Mammary epithelial cell (primary cell): ENCODE measurements at regions of chr12 and their contacts with region 1.

Region 1: GRCh38 chr12:93121729-93122488 is 192.8 kb upstream of the EEA1 start:
- DNase-seq: peak; percentile 95
- H3K4me3 ChIP-seq: peak overlapping the region in 2 of 3 experiments; percentile 12 to 21
- H3K27ac ChIP-seq: peak overlapping the region; percentile 95
- H3K4me1 ChIP-seq: peaks cover 28% of the 10 kb centered on the region
- H3K27me3 ChIP-seq: no peaks in the 10 kb centered on the region
- CTCF ChIP-seq: no peak

Region 2: GRCh38 chr12:92759634-92760268 is 362.2 kb before region 1 on chr12:
- CTCF ChIA-PET with region 1: interaction called, 10 read pairs
- dilution Hi-C with region 1: no loop called
- in situ Hi-C with region 1: no loop called
- intact Hi-C with region 1: no loop called
- DNase-seq: peak; percentile 87
- H3K4me3 ChIP-seq: no peak overlapping the region
- H3K27ac ChIP-seq: no peak overlapping the region
- H3K4me1 ChIP-seq: peaks cover 10% of the 10 kb centered on the region
- H3K27me3 ChIP-seq: no peaks in the 10 kb centered on the region
- CTCF ChIP-seq: no peak

Region 3: GRCh38 chr12:93087840-93088610 is 33.9 kb before region 1 on chr12:
- CTCF ChIA-PET with region 1: no interaction called
- dilution Hi-C with region 1: no loop called
- in situ Hi-C with region 1: no loop called
- intact Hi-C with region 1: loop called (anchors 1 kb)
- DNase-seq: no peak
- H3K4me3 ChIP-seq: no peak overlapping the region
- H3K27ac ChIP-seq: no peak overlapping the region
- H3K4me1 ChIP-seq: peaks cover 33% of the 10 kb centered on the region
- H3K27me3 ChIP-seq: no peaks in the 10 kb centered on the region
- CTCF ChIP-seq: no peak

Region 4: DNA sequence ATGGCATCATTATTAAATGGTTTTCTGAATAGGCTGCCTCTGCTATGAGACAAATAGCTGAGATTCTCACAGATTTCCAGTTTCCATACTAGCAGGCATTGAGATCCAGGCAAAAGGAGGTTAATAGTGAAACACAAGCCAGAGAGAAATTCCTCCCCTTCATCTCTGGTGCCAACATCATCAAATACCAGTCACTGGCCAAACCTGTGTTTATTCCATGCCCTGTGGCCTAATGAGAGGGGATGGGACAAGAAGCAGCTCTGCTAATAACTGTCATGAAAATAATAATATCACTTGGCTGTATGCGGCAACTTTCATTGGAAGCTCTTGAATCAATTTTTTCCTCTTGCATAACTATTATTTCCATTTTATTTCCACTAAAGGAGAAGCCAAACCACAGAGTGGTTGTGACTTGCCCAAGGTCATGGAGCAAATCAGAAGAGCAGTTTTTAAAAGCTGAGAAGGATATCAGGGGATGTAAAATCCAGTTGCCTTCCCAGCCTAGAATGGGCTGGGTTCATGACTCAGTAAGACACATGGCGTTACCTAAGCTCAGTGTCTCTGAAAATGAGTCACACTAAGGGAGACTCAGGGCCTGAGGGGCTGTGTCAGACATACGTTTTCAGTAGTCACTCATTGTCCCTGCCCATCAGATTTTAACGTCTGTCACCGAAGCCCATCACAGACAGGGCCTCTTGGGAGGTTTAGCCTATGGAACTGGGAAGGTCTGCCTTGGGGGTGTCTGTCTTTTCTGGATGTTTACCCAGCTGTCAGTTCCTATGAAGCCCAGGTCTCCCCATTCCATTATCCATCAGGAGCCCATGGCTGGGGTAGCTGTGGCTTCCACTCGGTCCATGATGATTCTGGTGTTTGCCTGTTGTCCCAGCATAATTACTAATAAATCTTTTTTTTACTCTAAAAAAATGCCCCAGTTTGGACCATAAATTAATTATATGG is 16.0 kb after region 1 on chr12:
- CTCF ChIA-PET with region 1: no interaction called
- dilution Hi-C with region 1: no loop called
- in situ Hi-C with region 1: no loop called
- intact Hi-C with region 1: loop called (anchors 1 kb)
- DNase-seq: peak; percentile 99
- H3K4me3 ChIP-seq: no peak overlapping the region
- H3K27ac ChIP-seq: peak overlapping the region; percentile 49
- H3K4me1 ChIP-seq: peaks cover 28% of the 10 kb centered on the region
- H3K27me3 ChIP-seq: no peaks in the 10 kb centered on the region
- CTCF ChIP-seq: no peak

Region 5: GRCh38 chr12:94207849-94208621 is 1086.1 kb after region 1 on chr12:
- CTCF ChIA-PET with region 1: no interaction called
- dilution Hi-C with region 1: no loop called
- in situ Hi-C with region 1: no loop called
- intact Hi-C with region 1: no loop called
- DNase-seq: no peak
- H3K4me3 ChIP-seq: no peak overlapping the region
- H3K27ac ChIP-seq: no peak overlapping the region
- H3K4me1 ChIP-seq: no peaks in the 10 kb centered on the region
- H3K27me3 ChIP-seq: peaks cover 4% of the 10 kb centered on the region
- CTCF ChIP-seq: no peak